Right ventricle myocardium inferior (tissue), 1 donor: ENCODE measurements at regions of chr2 and their contacts with region 1.

Region 1: DNA sequence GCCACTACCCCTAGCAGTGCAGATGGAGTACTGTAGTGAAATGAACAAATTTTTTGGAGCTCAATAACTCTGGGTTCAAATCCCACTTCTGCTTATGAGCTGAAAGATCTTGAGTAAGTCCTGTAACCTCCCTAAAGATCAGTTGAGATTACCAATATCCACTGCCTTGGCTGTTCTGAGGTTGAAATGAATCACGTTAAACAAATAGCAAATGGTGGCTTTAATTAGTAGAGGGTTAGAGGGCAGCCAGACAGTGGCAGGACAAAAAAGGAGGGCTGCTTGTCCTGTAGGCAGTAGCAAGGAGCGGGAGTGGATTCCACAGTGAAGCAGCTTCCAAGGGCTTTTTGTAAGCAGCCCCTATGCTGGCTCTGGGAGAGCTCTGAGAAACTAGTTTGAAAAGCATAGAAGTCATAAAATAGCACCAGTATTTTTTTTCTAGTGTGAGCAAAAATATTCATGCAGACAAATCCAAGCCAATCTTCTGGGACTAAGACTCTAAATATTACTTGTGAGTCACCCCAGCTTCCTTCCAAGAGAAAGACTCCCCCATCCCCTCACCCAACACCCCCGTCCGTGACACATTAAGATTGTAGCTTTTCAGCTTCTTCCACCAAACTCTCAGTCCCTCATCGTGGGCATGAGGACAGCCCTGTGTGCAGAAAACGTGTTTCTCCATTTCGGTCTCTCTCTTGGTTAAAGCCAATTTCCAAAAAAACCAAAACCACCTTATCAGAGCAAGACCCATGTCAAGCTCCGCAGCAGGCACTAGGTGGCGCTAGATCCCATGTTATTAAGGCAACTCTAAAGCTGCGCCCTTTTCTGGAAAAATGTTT is 123.5 kb upstream of the LGALSL start:
- DNase-seq: peak; percentile 79
- ATAC-seq: peak; percentile 77

Region 2: GRCh38 chr2:64052468-64053241 is 277.8 kb before region 1 on chr2:
- intact Hi-C with region 1: loop called (anchors 1 kb)
- DNase-seq: no peak
- ATAC-seq: no peak

Region 3: DNA sequence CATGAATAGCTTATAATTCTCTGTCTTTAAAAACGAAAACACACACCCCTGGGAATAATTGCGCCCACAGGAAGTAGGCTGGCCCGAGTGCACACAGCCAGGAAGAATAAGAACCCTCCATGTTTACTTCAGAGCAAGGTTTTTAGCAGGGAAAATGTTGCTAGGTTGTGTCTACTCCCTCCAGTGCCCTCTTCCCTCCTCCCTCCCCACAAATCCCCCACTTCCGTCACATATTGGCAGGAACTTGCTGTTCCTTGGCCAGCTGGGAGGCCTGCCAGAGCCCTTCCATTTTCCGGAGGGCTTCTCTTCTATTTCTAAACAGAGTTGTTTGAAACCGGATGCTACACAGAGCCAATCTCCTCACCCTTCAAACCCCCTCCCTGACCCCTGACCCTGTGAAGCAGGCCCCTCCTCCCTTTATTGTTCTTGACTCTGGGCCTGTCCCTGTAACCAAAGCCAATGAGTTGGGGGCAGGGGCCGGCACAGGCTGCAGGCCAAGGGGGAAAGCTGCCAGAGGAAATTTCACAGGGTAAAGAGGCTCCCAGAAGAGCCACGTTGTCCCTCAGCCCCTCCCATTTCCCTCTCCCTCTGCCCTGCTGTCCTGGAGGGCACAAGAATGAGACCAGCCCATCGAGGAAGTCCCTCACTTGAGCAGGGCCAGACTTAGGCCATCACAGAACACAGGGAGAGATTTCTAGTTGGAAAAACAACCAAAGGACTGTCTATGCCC is 73.7 kb after region 1 on chr2:
- intact Hi-C with region 1: loop called (anchors 5 kb)
- DNase-seq: peak; percentile 85
- ATAC-seq: peak; percentile 86

Region 4: DNA sequence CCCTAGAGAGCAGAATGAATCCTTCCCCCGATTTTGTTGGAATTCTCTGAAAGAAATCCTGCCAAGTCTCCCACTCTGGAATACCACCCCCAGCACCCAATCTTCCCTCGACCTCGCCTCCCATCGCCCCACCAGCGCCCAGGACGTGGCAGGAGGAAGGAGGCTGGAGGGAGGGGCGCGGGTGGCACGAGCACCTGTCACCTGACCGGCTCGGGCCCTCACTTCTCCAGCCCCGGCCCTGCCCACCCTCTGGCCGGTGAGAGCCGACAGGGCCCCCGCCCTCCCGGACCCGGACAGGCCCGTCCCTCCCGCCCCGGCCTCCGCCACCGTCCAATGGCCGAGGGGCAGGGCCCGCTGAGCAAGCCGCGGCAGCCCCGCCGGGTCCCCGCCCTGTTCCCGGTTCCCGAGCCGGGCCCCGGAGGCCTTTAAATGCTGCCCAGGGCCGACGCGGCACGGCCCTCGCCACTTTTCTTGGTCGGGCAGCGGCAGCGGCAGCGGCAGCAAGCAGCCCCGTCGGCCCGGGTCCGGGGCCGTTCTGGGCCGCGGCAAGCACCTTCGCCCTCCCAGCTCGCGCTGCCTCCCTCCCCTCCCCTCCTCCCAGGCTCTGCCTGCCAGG is 123.4 kb after region 1 on chr2 and contains the start of gene LGALSL:
- intact Hi-C with region 1: loop called (anchors 10 kb)
- DNase-seq: peak; percentile 85
- ATAC-seq: peak; percentile 87
- total RNA-seq, gene LGALSL: 6.6 TPM

Region 5: DNA sequence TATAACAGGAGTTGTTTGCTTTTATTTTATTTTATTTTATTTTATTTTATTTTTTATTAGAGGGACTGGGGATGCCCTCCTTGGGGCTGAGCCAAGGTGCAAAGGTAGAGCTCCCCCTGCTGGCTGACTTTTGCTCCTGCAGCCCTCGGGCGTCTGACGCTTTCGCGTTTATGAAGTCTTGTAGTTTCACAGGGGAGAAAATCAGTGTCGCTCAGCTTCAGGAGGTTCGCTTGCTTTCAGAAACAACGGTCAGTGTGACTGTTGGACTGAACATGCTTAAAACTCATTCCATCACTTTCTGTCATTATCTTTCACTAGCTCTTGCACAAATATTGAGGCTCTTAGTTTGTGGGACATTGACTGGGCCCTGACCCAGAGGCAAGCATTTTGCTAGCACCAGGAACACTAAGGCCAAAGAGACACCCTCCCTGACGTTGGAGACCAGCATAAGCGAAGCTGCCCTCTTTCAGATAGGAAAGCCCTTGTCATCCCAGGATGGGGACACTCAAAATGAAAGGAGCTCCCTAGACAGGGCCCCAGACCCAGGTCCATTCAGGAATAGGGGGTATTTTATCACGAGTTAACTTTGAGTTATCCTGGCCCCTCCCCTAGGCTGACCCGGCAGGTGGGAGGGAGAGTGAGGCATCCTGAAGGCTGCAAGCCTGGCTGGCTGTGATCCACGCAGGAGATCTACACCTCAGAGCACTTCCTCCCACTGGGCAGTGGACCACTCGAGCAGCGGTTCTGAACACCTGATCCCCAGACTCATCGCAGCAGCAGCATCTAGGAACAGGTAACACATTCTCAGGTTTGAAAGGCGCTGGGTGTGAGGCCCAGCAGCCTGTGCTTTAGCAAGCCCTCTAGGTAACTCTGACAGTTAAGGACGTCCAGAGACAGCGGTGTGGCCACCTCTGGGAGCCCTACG is 157.8 kb after region 1 on chr2:
- intact Hi-C with region 1: loop called (anchors 1 kb)
- DNase-seq: peak; percentile 77
- ATAC-seq: no peak

Region 6: GRCh38 chr2:64562148-64562784 is 231.8 kb after region 1 on chr2:
- intact Hi-C with region 1: loop called (anchors 2 kb)
- DNase-seq: no peak
- ATAC-seq: no peak

Region 7: DNA sequence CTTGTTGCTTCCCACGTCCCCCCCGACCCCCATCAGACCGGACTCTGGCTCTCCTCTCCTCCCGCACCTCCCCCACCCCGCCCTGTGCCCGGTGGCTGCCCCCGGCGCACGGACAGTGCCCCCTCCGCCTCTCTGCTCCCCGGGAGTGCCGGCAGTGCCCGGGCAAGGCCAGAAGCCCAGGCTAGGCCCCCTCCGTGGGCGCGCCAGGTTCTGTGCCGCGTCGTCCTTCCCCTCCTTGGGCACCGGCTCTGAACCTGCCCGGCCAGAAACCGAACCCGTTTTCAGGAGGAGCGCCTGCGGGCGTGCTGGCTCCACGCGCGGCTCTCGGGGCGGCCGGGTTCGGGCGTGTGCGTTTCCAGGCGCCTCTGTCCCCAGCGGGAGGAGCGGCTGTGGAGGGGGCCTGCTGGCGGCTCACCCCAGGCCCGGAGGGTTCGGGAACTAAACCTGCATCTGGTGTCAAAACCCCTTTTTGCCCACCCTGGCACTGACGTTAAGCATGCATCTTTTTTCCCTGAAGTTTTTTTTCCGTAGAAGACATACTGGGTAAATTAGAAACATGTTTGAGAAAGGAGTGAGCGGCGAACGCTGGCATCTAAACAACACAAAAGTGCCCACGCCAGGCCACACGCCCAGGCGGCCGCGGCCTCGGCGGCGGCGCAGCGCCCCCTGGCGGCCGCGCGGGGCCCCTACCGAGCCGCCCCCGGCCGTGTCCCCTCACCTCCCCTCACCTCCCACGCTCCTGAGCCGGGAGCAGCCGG is 534.8 kb after region 1 on chr2:
- intact Hi-C with region 1: loop called (anchors 5 kb)
- DNase-seq: peak; percentile 86
- ATAC-seq: peak; percentile 87